Ovary (tissue), 10 donors: ENCODE measurements at regions of chr5 and their contacts with region 1.

Region 1: DNA sequence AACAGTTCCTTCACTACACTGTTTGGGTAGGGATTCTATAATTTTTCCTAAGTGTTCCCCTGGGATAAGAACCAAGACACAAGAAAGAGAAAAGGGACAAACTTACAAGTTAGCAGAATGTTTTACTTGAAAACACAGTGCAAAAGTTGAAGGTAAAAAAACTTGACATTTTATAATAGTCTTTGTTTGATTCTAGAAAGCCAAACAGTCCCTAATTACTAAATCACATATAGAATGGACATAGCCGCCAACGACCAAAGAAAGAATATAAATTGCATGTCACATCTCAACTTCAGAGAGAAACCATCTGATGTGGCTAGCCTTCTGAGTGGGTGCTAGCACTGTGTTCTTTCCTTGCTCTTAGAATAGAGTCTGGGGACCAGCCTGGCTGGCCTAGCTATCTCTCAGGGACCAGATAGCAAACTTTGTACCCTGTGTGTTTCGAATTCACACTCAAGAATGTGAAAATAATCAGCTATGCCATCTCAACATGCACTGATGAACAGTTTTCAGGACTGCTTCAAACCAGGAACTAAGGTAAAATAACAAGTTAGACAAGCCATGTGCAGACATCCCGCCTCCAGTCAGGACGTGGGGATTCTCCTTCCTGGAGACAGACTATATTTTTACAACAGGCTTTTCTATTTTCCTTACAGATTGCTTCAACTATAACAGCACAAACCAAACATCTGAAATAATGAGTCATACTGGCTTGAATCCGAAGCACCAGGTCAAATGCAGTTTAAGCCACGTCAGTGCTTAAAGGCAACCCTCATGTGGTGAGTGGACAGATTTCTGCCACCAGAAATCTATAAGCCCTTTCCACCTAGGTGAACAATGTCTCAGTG is 53.7 kb downstream of the LHFPL2 start:
- DNase-seq: peak; percentile 37 to 74 (median 48)
- H3K4me3 ChIP-seq: no peak overlapping the region
- H3K27ac ChIP-seq: peak overlapping the region in 1 of 2 donors; percentile 82
- H3K4me1 ChIP-seq: peaks cover 31% of the 10 kb centered on the region
- H3K27me3 ChIP-seq: no peaks in the 10 kb centered on the region
- CTCF ChIP-seq: no peak
- EP300 ChIP-seq: no peak
- POLR2A ChIP-seq: no peak

Region 2: DNA sequence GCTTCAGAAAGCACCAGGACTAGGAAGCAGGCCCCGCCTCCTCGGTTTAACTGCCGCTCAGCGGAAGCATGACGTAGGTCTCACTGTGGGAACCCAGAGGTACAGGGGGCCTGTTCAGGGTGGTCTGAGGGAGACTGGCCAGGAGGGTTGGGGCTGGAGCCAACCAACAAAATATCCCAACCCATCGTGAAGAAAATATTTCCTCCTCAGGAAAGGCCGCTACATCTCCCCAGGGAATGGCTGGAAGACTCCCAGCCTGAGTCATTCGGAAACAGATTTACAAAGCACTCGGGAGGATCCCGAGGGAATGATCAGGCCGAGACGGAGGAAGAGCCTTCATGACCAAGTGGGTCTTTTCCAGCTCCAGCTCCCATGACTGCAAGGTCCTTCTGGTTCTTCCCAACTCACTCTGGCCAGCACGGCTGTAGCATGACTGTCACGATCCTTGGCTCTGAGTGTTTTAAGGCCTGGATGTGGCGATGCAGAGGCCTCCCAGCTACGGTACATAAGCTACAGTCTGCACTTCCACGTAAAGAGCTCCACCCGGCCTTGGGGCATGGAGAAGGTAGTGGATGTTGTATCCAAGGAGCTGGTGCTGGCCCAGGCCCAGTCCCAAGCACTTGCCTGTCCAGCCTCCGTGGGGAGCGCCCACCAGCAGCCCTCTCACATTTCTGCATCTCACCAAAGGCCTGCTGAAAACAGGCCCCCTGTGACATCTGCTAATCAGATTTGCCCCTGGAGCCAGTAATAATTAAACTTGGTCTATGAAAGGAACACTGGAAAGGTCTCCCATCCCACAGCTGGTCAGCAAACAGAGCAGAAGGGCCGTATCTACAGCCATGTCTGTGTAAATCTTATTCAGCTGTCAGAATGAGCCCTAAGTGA is 46.9 kb before region 1 on chr5:
- intact Hi-C with region 1: loop called in 1 of 4 experiments (anchors 10 kb)
- DNase-seq: peak; percentile 80 to 94 (median 89)
- H3K4me3 ChIP-seq: no peak overlapping the region
- H3K27ac ChIP-seq: peak overlapping the region; percentile 63 to 82
- H3K4me1 ChIP-seq: peaks cover 21% of the 10 kb centered on the region
- H3K27me3 ChIP-seq: no peaks in the 10 kb centered on the region
- CTCF ChIP-seq: no peak
- EP300 ChIP-seq: no peak
- POLR2A ChIP-seq: no peak